Natural killer cell (primary cell): ENCODE measurements at regions of chr1 and their contacts with region 1.

Region 1: GRCh38 chr1:27341525-27342252 is at the start of gene SYTL1:
- DNase-seq: peak; percentile 75 to 77
- ATAC-seq: peak; percentile 75 to 82 (median 76)
- H3K4me3 ChIP-seq: peak within 1 kb of the TSS; percentile 80
- H3K4me3 Mint-ChIP-seq: peak within 1 kb of the TSS; percentile 91
- H3K27ac ChIP-seq: peak within 1 kb of the TSS; percentile 92
- H3K27ac Mint-ChIP-seq: peak within 1 kb of the TSS; percentile 88 to 90
- H3K4me1 ChIP-seq: peaks cover 55% of the 10 kb centered on the region
- H3K4me1 Mint-ChIP-seq: peaks cover 51 to 62% of the 10 kb centered on the region in 2 donors
- H3K27me3 ChIP-seq: no peaks in the 10 kb centered on the region
- H3K27me3 Mint-ChIP-seq: no peaks in the 10 kb centered on the region
- CTCF ChIP-seq: no peak
- total RNA-seq, gene SYTL1: 244 to 312 (median 273) TPM

Region 2: GRCh38 chr1:26695356-26696118 is 646.2 kb before region 1 on chr1 and contains the start of gene ARID1A:
- intact Hi-C with region 1: loop called (anchors 10 kb)
- DNase-seq: peak; percentile 97 to 98
- ATAC-seq: peak; percentile 63 to 83 (median 68)
- H3K4me3 ChIP-seq: peak within 1 kb of the TSS; percentile 71
- H3K4me3 Mint-ChIP-seq: peak within 1 kb of the TSS; percentile 98
- H3K27ac ChIP-seq: peak within 1 kb of the TSS; percentile 84
- H3K27ac Mint-ChIP-seq: peak within 1 kb of the TSS; percentile 91 to 98
- H3K4me1 ChIP-seq: peaks cover 32% of the 10 kb centered on the region
- H3K4me1 Mint-ChIP-seq: peaks cover 37 to 40% of the 10 kb centered on the region in 2 donors
- H3K27me3 ChIP-seq: no peaks in the 10 kb centered on the region
- H3K27me3 Mint-ChIP-seq: no peaks in the 10 kb centered on the region
- CTCF ChIP-seq: no peak
- total RNA-seq, gene ARID1A: 199 to 214 (median 202) TPM

Region 3: GRCh38 chr1:27300341-27301051 is 41.2 kb before region 1 on chr1:
- intact Hi-C with region 1: no loop called
- DNase-seq: peak; percentile 77 to 94
- ATAC-seq: peak; percentile 91 to 98 (median 91)
- H3K4me3 ChIP-seq: no peak overlapping the region
- H3K4me3 Mint-ChIP-seq: no peak overlapping the region
- H3K27ac ChIP-seq: no peak overlapping the region
- H3K27ac Mint-ChIP-seq: no peak overlapping the region
- H3K4me1 ChIP-seq: peaks cover 18% of the 10 kb centered on the region
- H3K4me1 Mint-ChIP-seq: peaks cover 6 to 7% of the 10 kb centered on the region in 2 donors
- H3K27me3 ChIP-seq: no peaks in the 10 kb centered on the region
- H3K27me3 Mint-ChIP-seq: no peaks in the 10 kb centered on the region
- CTCF ChIP-seq: peak; percentile 91

Region 4: DNA sequence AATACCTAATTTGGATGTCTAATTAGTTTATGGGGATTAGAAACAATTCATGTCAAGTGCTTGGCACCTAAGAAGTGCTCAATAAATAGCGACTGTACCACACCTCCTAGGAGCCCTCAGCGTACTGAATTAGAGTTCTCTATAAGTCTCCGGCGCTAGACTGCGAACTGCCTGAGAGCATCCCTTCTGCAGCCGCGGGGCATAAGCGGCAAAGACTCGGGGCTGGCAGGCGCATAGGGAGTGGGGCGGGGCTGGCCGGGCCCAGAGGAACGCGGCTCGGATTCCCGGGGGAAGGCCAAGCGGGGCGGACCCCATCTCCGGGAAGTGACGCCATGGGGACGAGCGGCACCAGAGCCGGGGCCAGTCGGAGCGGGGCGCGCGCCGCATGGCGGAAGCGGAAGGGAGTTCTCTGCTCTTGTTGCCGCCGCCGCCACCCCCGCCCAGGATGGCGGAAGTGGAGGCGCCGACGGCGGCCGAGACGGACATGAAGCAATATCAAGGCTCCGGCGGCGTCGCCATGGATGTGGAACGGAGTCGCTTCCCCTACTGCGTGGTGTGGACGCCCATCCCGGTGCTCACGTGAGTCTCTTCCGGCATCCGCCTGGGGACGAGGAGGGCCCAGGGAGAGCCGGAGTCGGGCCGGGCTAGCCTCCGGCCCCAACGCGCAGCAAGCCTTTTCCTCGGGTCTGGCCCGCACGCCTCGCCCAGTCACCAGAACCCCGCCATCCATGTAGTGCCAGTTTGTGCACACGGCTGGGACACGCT is 19.7 kb before region 1 on chr1 and contains the start of gene TMEM222:
- intact Hi-C with region 1: loop called (anchors 1 kb)
- DNase-seq: peak; percentile 94 to 98
- ATAC-seq: peak; percentile 96 to 99 (median 97)
- H3K4me3 ChIP-seq: peak within 1 kb of the TSS; percentile 97
- H3K4me3 Mint-ChIP-seq: peak within 1 kb of the TSS; percentile 92
- H3K27ac ChIP-seq: peak within 1 kb of the TSS; percentile 89
- H3K27ac Mint-ChIP-seq: peak within 1 kb of the TSS; percentile 86 to 93
- H3K4me1 ChIP-seq: peaks cover 16% of the 10 kb centered on the region
- H3K4me1 Mint-ChIP-seq: peaks cover 33 to 48% of the 10 kb centered on the region in 2 donors
- H3K27me3 ChIP-seq: no peaks in the 10 kb centered on the region
- H3K27me3 Mint-ChIP-seq: peaks cover 0 to 7% of the 10 kb centered on the region in 2 donors
- CTCF ChIP-seq: no peak
- total RNA-seq, gene TMEM222: 34.9 to 41.2 (median 37.3) TPM

Region 5: GRCh38 chr1:27357281-27358037 is 15.8 kb after region 1 on chr1:
- intact Hi-C with region 1: loop called (anchors 1 kb)
- DNase-seq: peak; percentile 81 to 91
- ATAC-seq: peak; percentile 70 to 91 (median 75)
- H3K4me3 ChIP-seq: peak overlapping the region; percentile 61
- H3K4me3 Mint-ChIP-seq: peak overlapping the region; percentile 77
- H3K27ac ChIP-seq: peak overlapping the region; percentile 74
- H3K27ac Mint-ChIP-seq: peak overlapping the region; percentile 78 to 84
- H3K4me1 ChIP-seq: peaks cover 50% of the 10 kb centered on the region
- H3K4me1 Mint-ChIP-seq: peaks cover 25 to 41% of the 10 kb centered on the region in 2 donors
- H3K27me3 ChIP-seq: no peaks in the 10 kb centered on the region
- H3K27me3 Mint-ChIP-seq: no peaks in the 10 kb centered on the region
- CTCF ChIP-seq: peak; percentile 99

Region 6: GRCh38 chr1:27556781-27557595 is 215.3 kb after region 1 on chr1:
- intact Hi-C with region 1: no loop called
- DNase-seq: peak; percentile 73 to 87
- ATAC-seq: peak; percentile 85 to 92 (median 85)
- H3K4me3 ChIP-seq: no peak overlapping the region
- H3K4me3 Mint-ChIP-seq: peak overlapping the region; percentile 63
- H3K27ac ChIP-seq: no peak overlapping the region
- H3K27ac Mint-ChIP-seq: peak overlapping the region; percentile 77 to 83
- H3K4me1 ChIP-seq: peaks cover 43% of the 10 kb centered on the region
- H3K4me1 Mint-ChIP-seq: peaks cover 42 to 57% of the 10 kb centered on the region in 2 donors
- H3K27me3 ChIP-seq: no peaks in the 10 kb centered on the region
- H3K27me3 Mint-ChIP-seq: no peaks in the 10 kb centered on the region
- CTCF ChIP-seq: peak; percentile 95